Dendritic cell treated with granulocyte-macrophage colony-stimulating factor and Interleukin-4, amounts not matched to agents 40 ng/mL and 50 ng/mL, for 4 days (primary cell): ENCODE measurements at regions of chr1 and their contacts with region 1.

Region 1: GRCh38 chr1:192545896-192546521 is 29.6 kb upstream of the RGS1 start:
- H3K4me3 Mint-ChIP-seq: peak overlapping the region; percentile 52
- H3K27ac Mint-ChIP-seq: peak overlapping the region; percentile 77
- H3K4me1 Mint-ChIP-seq: peaks cover 25% of the 10 kb centered on the region
- H3K27me3 Mint-ChIP-seq: no peaks in the 10 kb centered on the region

Region 2: GRCh38 chr1:192516776-192517297 is 29.2 kb before region 1 on chr1:
- intact Hi-C with region 1: loop called (anchors 5 kb)
- H3K4me3 Mint-ChIP-seq: peak overlapping the region; percentile 54
- H3K27ac Mint-ChIP-seq: peak overlapping the region; percentile 79
- H3K4me1 Mint-ChIP-seq: peaks cover 42% of the 10 kb centered on the region
- H3K27me3 Mint-ChIP-seq: no peaks in the 10 kb centered on the region

Region 3: GRCh38 chr1:192530254-192530653 is 15.8 kb before region 1 on chr1:
- intact Hi-C with region 1: loop called (anchors 1 kb)
- H3K4me3 Mint-ChIP-seq: no peak overlapping the region
- H3K27ac Mint-ChIP-seq: peak overlapping the region; percentile 83
- H3K4me1 Mint-ChIP-seq: peaks cover 42% of the 10 kb centered on the region
- H3K27me3 Mint-ChIP-seq: no peaks in the 10 kb centered on the region

Region 4: DNA sequence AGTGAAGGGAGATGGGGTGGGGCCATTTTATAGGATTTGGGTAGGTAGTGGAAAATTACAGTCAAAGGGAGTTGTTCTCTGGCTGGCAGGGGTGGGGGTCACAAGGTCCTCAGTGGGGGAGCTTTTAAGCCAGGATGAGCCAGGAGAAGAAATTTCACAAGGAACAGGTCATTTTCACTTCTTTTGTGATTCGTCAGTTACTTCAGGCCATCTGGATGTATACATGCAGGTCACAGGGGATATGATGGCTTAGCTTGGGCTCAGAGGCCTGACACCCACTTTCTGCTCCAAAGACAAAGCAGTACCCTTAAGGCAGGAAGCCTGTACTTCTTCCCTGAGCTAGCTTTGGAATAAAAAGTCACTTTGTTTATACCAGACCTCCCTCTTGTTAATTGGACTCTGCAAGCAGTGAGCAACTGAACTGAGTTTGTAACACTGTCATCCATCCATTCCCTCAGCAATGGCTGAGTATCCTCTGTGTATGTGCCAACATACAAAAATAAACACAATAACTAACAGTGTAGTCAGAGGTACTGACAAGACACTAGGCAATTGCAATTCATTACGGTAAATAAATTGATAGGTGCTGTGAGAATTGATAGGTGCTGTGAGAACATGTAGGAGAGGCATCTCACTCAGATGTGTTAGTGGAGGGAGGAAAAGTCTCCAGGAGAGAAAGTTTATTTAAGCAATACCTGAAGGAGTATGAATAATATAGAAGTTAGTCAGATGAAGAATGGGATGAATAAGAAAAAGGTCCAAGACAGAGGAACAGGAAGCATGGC is 248.2 kb after region 1 on chr1:
- intact Hi-C with region 1: no loop called
- H3K4me3 Mint-ChIP-seq: no peak overlapping the region
- H3K27ac Mint-ChIP-seq: no peak overlapping the region
- H3K4me1 Mint-ChIP-seq: peaks cover 13% of the 10 kb centered on the region
- H3K27me3 Mint-ChIP-seq: no peaks in the 10 kb centered on the region

Region 5: GRCh38 chr1:192866241-192866868 is 320.3 kb after region 1 on chr1:
- intact Hi-C with region 1: no loop called
- H3K4me3 Mint-ChIP-seq: no peak overlapping the region
- H3K27ac Mint-ChIP-seq: no peak overlapping the region
- H3K4me1 Mint-ChIP-seq: peaks cover 7% of the 10 kb centered on the region
- H3K27me3 Mint-ChIP-seq: no peaks in the 10 kb centered on the region